Left ventricle myocardium inferior (tissue), 1 donor: ENCODE measurements at regions of chr3 and their contacts with region 1.

Region 1: DNA sequence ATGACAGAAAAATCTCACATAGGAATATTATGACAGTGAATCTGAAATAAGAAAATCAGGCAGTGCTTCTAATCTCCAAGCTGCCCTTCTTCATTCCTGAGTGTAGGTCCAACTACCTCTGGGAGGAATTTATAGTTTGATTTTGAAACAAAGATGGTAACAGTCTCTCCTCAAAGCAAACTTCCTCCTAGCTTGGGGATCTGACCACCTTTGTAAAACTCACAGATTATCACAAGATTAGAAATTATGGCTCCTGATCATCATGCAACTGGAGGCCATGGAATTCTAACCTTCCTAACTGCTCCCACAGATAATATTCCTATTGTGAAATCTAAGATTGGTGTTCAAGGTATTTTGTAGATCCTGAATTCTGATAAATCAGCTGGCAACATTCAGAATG is 7.4 kb downstream of the OR5H14 start:
- DNase-seq: no peak
- H3K4me3 ChIP-seq: no peak overlapping the region
- H3K27ac ChIP-seq: no peak overlapping the region
- H3K4me1 ChIP-seq: no peaks in the 10 kb centered on the region
- H3K27me3 ChIP-seq: no peaks in the 10 kb centered on the region
- CTCF ChIP-seq: no peak

Region 2: DNA sequence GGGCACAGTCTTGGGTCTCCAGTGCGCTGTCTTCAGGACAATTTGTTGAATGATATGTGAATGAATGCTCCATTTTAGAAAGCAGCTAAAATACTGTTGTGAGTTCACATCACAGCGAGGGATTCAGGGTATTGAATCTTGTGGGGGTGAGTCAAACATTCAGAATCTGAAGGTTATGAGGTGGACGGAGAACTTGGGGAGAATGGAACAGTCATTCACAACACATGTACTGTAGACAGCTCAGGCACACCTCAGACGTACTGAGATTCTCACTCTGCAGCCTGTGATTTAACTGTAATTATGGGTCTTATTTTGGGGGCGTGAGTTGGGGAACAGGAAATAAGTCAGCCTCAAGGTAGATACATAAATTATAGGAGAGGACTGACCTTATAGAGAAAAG is 318.9 kb before region 1 on chr3:
- intact Hi-C with region 1: no loop called
- DNase-seq: no peak
- H3K4me3 ChIP-seq: no peak overlapping the region
- H3K27ac ChIP-seq: no peak overlapping the region
- H3K4me1 ChIP-seq: peaks cover 55% of the 10 kb centered on the region
- H3K27me3 ChIP-seq: no peaks in the 10 kb centered on the region
- CTCF ChIP-seq: no peak

Region 3: DNA sequence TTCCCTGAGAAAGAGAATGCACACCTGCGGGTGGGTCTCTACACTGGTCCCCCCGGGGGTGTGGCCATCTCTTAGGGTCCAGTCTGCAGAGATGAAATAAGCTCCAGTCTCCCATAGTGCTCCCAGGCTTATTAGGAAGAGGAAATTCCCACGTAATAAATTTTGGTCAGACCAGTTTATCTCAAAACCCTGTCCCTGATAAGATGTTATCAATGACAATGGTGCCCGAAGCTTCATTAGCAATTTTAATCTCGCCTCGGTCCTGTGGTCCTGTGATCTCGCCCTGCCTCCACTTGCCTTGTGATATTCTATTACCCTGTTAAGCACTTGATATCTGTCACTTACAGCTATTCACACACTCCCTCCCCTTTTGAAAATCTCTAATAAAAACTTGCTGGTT is 58.6 kb after region 1 on chr3:
- intact Hi-C with region 1: loop called (anchors 2 kb)
- DNase-seq: no peak
- H3K4me3 ChIP-seq: no peak overlapping the region
- H3K27ac ChIP-seq: no peak overlapping the region
- H3K4me1 ChIP-seq: no peaks in the 10 kb centered on the region
- H3K27me3 ChIP-seq: no peaks in the 10 kb centered on the region
- CTCF ChIP-seq: no peak